MCF 10A (cell line): ENCODE measurements at regions of chr20 and their contacts with region 1.

Region 1: GRCh38 chr20:44885392-44886265 is at the start of gene YWHAB:
- DNase-seq: peak; percentile 98
- H3K4me3 Mint-ChIP-seq: peak within 1 kb of the TSS; percentile 95
- H3K27ac Mint-ChIP-seq: peak within 1 kb of the TSS; percentile 93
- H3K4me1 Mint-ChIP-seq: peaks cover 17% of the 10 kb centered on the region
- H3K27me3 Mint-ChIP-seq: no peaks in the 10 kb centered on the region
- CTCF ChIP-seq: no peak
- total RNA-seq, gene YWHAB: 235 and 250 TPM in 2 replicates

Region 2: GRCh38 chr20:44747166-44748004 is 138.2 kb before region 1 on chr20:
- CTCF ChIA-PET with region 1: interaction called, 12 read pairs
- POLR2A ChIA-PET with region 1: interaction called, 5 read pairs
- intact Hi-C with region 1: no loop called
- DNase-seq: peak; percentile 98
- H3K4me3 Mint-ChIP-seq: peak overlapping the region; percentile 39
- H3K27ac Mint-ChIP-seq: peak overlapping the region; percentile 77
- H3K4me1 Mint-ChIP-seq: peaks cover 20% of the 10 kb centered on the region
- H3K27me3 Mint-ChIP-seq: peaks cover 47% of the 10 kb centered on the region
- CTCF ChIP-seq: peak; percentile 63

Region 3: DNA sequence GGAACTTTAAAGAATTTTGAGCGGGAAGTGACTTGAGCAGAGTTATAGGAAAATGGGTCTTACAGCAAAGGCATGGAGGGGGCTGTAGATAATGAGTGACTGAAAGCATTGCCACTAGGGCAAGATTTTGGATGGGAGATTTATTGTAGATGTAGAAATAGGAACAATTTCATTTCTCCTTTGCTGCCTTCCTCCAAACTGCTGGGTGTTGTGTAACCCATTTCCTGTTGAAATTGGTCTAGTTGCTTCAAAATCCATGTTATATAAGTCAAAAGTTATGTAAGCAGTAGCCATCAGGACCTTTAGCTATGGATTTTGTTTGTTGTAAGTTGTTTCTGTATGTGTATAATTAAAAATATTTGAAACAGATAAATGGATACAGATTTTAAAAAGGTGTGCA is 11.0 kb after region 1 on chr20:
- CTCF ChIA-PET with region 1: interaction called, 6 read pairs
- POLR2A ChIA-PET with region 1: interaction called, 16 read pairs
- intact Hi-C with region 1: no loop called
- DNase-seq: peak; percentile 38
- H3K4me3 Mint-ChIP-seq: no peak overlapping the region
- H3K27ac Mint-ChIP-seq: no peak overlapping the region
- H3K4me1 Mint-ChIP-seq: peaks cover 47% of the 10 kb centered on the region
- H3K27me3 Mint-ChIP-seq: no peaks in the 10 kb centered on the region
- CTCF ChIP-seq: no peak

Region 4: GRCh38 chr20:44901974-44902373 is 16.3 kb after region 1 on chr20:
- CTCF ChIA-PET with region 1: interaction called, 6 read pairs
- POLR2A ChIA-PET with region 1: interaction called, 16 read pairs
- intact Hi-C with region 1: no loop called
- DNase-seq: no peak
- H3K4me3 Mint-ChIP-seq: no peak overlapping the region
- H3K27ac Mint-ChIP-seq: peak overlapping the region; percentile 20
- H3K4me1 Mint-ChIP-seq: peaks cover 22% of the 10 kb centered on the region
- H3K27me3 Mint-ChIP-seq: no peaks in the 10 kb centered on the region
- CTCF ChIP-seq: no peak

Region 5: DNA sequence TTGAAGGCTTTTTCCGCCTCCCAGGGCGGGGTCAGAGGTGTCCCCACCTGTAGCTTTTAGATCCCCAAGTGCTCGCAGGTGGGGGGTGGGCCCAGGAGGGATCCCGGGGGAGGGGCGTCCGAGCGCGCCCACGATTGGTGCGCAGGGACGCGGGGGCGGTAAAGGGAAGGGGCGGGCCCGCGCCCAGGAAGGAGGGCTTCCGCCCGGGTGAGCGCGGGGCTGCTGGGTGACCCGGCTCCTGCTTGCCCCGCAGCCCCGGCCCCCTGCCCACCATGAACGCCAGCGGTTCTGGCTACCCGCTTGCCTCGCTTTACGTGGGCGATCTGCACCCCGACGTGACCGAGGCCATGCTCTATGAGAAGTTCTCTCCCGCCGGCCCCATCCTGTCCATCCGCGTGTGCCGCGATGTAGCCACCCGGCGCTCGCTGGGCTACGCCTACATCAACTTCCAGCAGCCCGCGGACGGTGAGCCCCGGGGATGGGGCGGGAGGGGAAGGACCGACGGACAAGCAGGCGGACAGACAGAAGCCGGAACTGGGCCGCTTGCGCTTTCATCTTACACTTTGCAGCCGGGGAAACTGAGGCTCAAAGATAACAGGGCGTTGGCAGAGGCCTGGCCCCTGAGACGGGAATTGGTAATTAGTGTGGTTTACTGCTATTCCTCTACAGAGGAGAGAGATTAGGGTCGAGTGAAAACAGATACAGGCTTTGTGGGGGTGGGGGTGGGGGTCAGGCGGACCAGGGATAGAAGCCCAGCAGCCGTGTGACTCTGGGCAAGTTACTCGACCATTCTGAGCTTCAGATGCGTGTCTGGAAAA is 24.5 kb after region 1 on chr20 and contains the start of gene PABPC1L:
- CTCF ChIA-PET with region 1: no interaction called
- POLR2A ChIA-PET with region 1: interaction called, 14 read pairs
- intact Hi-C with region 1: no loop called
- DNase-seq: peak; percentile 77
- H3K4me3 Mint-ChIP-seq: peak within 1 kb of the TSS; percentile 83
- H3K27ac Mint-ChIP-seq: peak within 1 kb of the TSS; percentile 46
- H3K4me1 Mint-ChIP-seq: no peaks in the 10 kb centered on the region
- H3K27me3 Mint-ChIP-seq: no peaks in the 10 kb centered on the region
- CTCF ChIP-seq: no peak
- total RNA-seq, gene PABPC1L: 150 and 182 TPM in 2 replicates

Region 6: DNA sequence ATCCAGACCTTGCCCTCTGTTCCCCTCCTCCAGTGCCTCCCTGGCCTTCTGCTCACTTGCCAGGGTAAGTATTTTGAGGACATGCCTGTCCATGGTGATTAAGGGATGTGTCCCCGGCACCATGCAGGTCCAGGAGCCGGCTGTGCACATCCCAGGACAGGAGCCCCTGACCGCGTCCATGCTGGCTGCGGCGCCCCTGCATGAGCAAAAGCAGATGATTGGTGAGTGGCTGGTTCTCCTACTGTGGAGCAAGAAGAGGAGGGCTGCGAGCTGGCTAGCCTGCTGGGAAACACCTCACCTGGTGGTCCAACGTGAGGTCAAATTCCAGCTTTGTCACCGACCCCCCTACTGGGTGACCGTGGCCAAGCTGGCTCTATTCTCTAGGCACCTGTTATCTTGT is 50.9 kb after region 1 on chr20:
- CTCF ChIA-PET with region 1: no interaction called
- POLR2A ChIA-PET with region 1: no interaction called
- intact Hi-C with region 1: no loop called
- DNase-seq: no peak
- H3K4me3 Mint-ChIP-seq: no peak overlapping the region
- H3K27ac Mint-ChIP-seq: no peak overlapping the region
- H3K4me1 Mint-ChIP-seq: no peaks in the 10 kb centered on the region
- H3K27me3 Mint-ChIP-seq: no peaks in the 10 kb centered on the region
- CTCF ChIP-seq: no peak

Region 7: DNA sequence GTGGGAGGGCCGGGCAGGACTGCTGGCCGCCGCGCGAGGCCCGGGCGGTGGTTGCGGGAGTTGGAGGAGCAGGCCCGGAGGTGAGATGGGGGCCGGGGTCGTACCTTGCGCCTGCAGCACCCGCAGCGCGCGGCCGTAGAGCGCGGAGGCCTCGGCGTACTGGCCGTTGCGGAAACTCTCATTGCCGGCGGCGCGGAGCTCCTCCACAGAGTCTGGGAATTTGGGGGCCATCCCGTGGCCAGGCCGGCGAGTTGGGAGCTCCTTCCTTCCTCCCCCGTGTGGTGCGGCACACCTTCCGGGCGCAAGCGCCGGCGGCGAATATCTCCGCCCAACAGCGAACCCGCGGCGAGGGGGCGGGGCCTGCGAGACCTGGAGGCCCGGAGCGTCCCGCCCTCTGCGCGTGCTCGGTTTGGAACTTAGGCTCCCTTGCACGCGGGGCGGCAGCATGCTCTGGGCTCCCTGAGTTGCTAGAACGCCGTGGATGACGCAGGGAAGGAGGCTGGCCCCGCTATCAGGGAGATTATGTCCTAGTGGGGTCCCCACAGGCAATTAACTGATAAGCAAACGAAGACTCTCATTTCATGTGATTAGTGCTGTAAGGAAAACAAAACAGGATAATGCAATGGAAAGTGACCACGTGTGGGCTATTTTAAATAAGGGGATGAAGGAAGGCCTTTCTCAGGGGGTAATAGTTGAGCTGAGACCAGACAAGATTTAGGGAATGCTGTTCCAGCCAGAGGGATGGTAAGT is 74.6 kb after region 1 on chr20 and contains the start of gene TOMM34:
- CTCF ChIA-PET with region 1: interaction called, 3 read pairs
- POLR2A ChIA-PET with region 1: interaction called, 24 read pairs
- intact Hi-C with region 1: no loop called
- DNase-seq: peak; percentile 94
- H3K4me3 Mint-ChIP-seq: peak within 1 kb of the TSS; percentile 76
- H3K27ac Mint-ChIP-seq: peak within 1 kb of the TSS; percentile 43
- H3K4me1 Mint-ChIP-seq: peaks cover 45% of the 10 kb centered on the region
- H3K27me3 Mint-ChIP-seq: no peaks in the 10 kb centered on the region
- CTCF ChIP-seq: no peak
- total RNA-seq, gene TOMM34: 55.5 and 60.0 TPM in 2 replicates

Region 8: DNA sequence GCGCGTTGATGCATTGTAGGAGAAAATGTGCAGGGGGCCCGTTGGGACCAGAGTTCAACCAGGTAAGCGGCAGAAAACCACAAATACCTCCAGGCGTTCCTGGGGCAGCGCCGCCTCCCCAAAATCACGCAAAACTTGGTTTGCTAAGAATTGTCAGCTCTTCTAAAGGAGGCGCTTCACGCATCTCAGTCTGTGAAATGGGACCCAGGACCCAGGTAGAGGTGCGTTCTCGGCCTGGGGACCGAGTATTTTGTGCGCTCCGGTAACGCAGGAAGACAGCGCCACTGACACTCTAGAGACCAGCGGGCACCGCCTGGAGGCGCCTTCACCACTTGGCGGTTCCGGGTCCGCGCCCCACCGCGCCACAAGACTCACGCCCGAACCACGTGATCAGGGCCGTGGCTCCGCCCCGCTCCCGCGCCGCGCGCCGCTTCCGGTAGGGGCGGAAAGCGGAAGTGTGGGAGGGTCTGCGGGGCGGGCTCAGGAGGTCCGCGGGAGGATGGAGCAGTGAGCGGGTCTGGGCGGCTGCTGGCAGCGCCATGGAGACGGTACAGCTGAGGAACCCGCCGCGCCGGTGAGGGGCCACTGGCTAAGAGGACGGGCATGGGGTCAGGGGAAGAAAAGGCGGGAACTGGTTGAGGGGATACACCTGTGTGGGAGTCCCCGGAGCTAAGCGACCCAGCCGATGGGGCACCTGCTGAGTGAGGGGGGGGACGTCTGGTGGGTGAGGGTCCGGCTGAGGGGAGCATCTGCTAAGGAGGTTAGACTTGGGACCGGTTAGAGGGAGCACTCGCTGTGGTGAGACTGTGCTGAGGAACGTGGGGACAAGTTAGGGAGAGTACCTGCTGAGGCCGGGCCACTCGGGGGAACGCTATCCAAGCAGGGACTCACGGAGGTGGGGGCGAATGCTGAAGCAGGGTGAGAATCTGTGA is 80.7 kb after region 1 on chr20 and contains the start of gene STK4:
- CTCF ChIA-PET with region 1: interaction called, 3 read pairs
- POLR2A ChIA-PET with region 1: interaction called, 15 read pairs
- intact Hi-C with region 1: no loop called
- DNase-seq: peak; percentile 92
- H3K4me3 Mint-ChIP-seq: peak within 1 kb of the TSS; percentile 98
- H3K27ac Mint-ChIP-seq: peak within 1 kb of the TSS; percentile 98
- H3K4me1 Mint-ChIP-seq: peaks cover 57% of the 10 kb centered on the region
- H3K27me3 Mint-ChIP-seq: no peaks in the 10 kb centered on the region
- CTCF ChIP-seq: peak; percentile 25
- total RNA-seq, gene STK4: 47.7 and 51.4 TPM in 2 replicates

Region 9: DNA sequence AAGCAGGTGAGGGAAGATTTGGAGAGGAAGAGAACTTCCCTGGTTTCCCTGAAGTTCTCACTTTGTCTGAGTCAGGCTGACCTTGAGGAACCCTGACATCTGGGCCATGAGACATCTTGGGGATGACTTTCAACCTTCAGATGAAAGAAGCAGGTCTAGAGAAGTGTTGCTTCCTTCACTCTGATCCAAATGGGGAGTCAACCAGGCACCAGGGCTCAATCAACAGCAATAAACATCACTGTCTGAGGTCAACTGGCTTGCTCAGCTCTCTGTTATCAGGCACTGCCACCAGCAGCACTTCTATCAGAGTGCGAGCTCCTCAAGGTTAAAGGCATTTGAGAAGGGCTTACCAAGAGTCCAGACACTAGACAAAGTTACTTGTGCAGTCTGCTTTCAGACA is 965.3 kb after region 1 on chr20:
- CTCF ChIA-PET with region 1: no interaction called
- POLR2A ChIA-PET with region 1: no interaction called
- intact Hi-C with region 1: no loop called
- DNase-seq: no peak
- H3K4me3 Mint-ChIP-seq: no peak overlapping the region
- H3K27ac Mint-ChIP-seq: no peak overlapping the region
- H3K4me1 Mint-ChIP-seq: no peaks in the 10 kb centered on the region
- H3K27me3 Mint-ChIP-seq: no peaks in the 10 kb centered on the region
- CTCF ChIP-seq: no peak